ENCODE measurements at regions of chr3 and their contacts with region 1.

Region 1: DNA sequence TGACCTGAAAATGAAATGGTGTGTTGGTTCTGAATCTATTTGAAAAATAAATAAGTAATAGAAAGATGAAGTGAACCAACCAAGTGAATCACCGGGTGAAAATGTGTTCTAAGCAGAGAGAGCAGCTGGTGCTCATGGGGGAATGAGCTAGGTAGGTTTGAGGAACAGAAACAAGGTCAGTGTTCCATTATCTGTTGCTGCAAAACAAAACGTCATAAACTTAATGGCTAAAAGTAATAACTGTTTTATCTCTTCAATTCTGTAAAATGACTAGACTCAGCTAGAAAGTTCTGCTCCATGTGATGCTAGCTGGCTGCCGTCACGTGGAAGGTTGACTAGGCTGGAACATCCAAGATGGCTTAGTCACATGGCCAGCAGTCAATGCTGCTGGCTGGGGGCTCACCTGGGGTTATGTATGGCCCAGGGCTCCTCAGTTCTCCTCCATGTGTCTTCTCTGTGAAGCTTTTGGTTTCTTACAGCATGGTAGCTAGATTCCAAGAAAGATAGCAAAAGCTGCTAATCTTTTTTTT is 13.3 kb upstream of the SH3BP5 start:
- DNase-seq: peak; percentile 71
- CTCF ChIP-seq: no peak

Region 2: GRCh38 chr3:15356186-15356585 is 10.5 kb after region 1 on chr3:
- CTCF ChIA-PET with region 1: interaction called, 19 read pairs
- POLR2A ChIA-PET with region 1: interaction called, 3 read pairs
- DNase-seq: no peak
- CTCF ChIP-seq: no peak

Region 3: DNA sequence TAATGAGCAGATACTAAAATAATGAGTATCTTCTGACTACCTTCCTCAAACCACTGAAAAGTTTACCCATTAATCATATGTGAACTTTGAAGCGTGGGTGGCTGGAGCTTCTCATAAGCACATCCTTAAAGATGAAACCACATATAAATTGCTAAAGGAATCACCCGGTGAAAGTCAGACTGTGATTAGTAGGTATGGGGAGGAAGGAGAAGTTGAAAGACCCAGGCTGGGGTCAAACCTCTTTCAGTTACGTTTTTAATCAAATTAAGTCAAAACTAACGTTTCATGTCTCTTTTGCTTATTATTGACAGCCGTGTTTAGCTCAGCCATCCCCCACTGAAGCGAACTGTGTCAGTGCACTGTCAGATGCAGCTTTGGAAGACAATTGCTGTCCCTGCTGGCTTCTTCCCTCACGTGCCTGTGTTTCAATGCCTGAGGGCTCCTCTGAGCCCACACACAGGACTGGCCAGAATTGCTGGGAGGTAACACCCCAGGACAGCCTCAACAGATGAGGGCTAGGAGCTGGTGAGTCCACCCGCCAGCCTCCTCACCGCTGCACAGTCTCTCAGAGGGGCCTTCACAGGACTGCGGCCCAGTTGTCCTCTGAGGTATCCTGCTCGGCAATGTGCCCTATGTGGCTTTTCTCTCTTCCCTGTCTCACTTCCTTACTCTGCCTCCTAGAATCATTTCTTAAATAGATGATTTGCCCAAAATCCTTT is 16.0 kb after region 1 on chr3:
- CTCF ChIA-PET with region 1: interaction called, 15 read pairs
- POLR2A ChIA-PET with region 1: interaction called, 5 read pairs
- DNase-seq: peak; percentile 83
- CTCF ChIP-seq: no peak